ENCODE measurements at regions of chr6 and their contacts with region 1.

Region 1: DNA sequence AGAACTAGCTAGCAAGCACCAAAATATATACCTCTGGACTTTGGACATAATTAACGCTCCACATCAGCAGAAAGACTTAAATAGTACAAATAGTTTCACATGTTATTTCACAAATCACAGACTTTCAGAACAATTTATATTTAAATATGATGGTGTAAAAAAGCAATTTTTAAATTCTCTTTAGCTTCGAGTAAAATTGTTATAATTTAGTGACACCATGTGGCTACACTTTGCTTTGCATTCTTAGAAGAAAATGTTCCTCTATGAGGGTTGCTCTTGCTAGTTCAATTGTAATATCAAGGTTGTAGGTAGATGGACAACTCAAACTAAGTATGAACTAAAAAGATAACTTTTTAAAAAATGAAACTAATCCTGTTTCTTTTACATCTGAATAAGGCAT is 69.0 kb downstream of the BTBD9 start:
- DNase-seq: no peak
- ATAC-seq: peak; percentile 61
- H3K4me3 ChIP-seq: no peak overlapping the region
- H3K27ac ChIP-seq: no peak overlapping the region
- H3K4me1 ChIP-seq: no peaks in the 10 kb centered on the region
- H3K27me3 ChIP-seq: no peaks in the 10 kb centered on the region
- CTCF ChIP-seq: peak; percentile 12 to 53 (median 46); a peak in 2 of 6 replicates
- EP300 ChIP-seq: no peak
- POLR2A ChIP-seq: no peak
- RAD21 ChIP-seq: peak; percentile 63

Region 2: GRCh38 chr6:38477680-38478260 is 93.0 kb before region 1 on chr6:
- CTCF ChIA-PET with region 1: interaction called, 3 read pairs
- POLR2A ChIA-PET with region 1: no interaction called
- RAD21 ChIA-PET with region 1: no interaction called
- SMC1A ChIA-PET with region 1: interaction called, 11 read pairs
- in situ Hi-C with region 1: no loop called
- intact Hi-C with region 1: no loop called
- DNase-seq: no peak
- ATAC-seq: no peak
- H3K4me3 ChIP-seq: no peak overlapping the region
- H3K27ac ChIP-seq: no peak overlapping the region
- H3K4me1 ChIP-seq: peaks cover 2% of the 10 kb centered on the region; the same call in 1 of the 2 replicates
- H3K27me3 ChIP-seq: no peaks in the 10 kb centered on the region
- CTCF ChIP-seq: no peak
- EP300 ChIP-seq: no peak
- POLR2A ChIP-seq: no peak
- RAD21 ChIP-seq: no peak

Region 3: GRCh38 chr6:38517005-38517404 is 53.7 kb before region 1 on chr6:
- CTCF ChIA-PET with region 1: interaction called, 4 read pairs
- POLR2A ChIA-PET with region 1: no interaction called
- RAD21 ChIA-PET with region 1: interaction called, 10 read pairs
- SMC1A ChIA-PET with region 1: interaction called, 3 read pairs
- in situ Hi-C with region 1: no loop called
- intact Hi-C with region 1: no loop called
- DNase-seq: no peak
- ATAC-seq: no peak
- H3K4me3 ChIP-seq: no peak overlapping the region
- H3K27ac ChIP-seq: no peak overlapping the region
- H3K4me1 ChIP-seq: no peaks in the 10 kb centered on the region
- H3K27me3 ChIP-seq: no peaks in the 10 kb centered on the region
- CTCF ChIP-seq: no peak
- EP300 ChIP-seq: no peak
- POLR2A ChIP-seq: no peak
- RAD21 ChIP-seq: no peak

Region 4: GRCh38 chr6:38552121-38552520 is 18.6 kb before region 1 on chr6:
- CTCF ChIA-PET with region 1: interaction called, 16 read pairs
- POLR2A ChIA-PET with region 1: no interaction called
- RAD21 ChIA-PET with region 1: interaction called, 5 read pairs
- SMC1A ChIA-PET with region 1: interaction called, 16 read pairs
- in situ Hi-C with region 1: no loop called
- intact Hi-C with region 1: no loop called
- DNase-seq: peak; percentile 56
- ATAC-seq: peak; percentile 94
- H3K4me3 ChIP-seq: no peak overlapping the region
- H3K27ac ChIP-seq: no peak overlapping the region
- H3K4me1 ChIP-seq: no peaks in the 10 kb centered on the region
- H3K27me3 ChIP-seq: no peaks in the 10 kb centered on the region
- CTCF ChIP-seq: no peak
- EP300 ChIP-seq: no peak
- POLR2A ChIP-seq: no peak
- RAD21 ChIP-seq: no peak

Region 5: GRCh38 chr6:38671885-38672467 is 101.2 kb after region 1 on chr6:
- CTCF ChIA-PET with region 1: interaction called, 6 read pairs
- POLR2A ChIA-PET with region 1: no interaction called
- RAD21 ChIA-PET with region 1: interaction called, 4 read pairs
- SMC1A ChIA-PET with region 1: interaction called, 4 read pairs
- in situ Hi-C with region 1: no loop called
- intact Hi-C with region 1: loop called (anchors 5 kb)
- DNase-seq: peak; percentile 55
- ATAC-seq: peak; percentile 91
- H3K4me3 ChIP-seq: no peak overlapping the region
- H3K27ac ChIP-seq: no peak overlapping the region
- H3K4me1 ChIP-seq: peaks cover 18% of the 10 kb centered on the region
- H3K27me3 ChIP-seq: no peaks in the 10 kb centered on the region
- CTCF ChIP-seq: peak; percentile 70 to 84 (median 81)
- EP300 ChIP-seq: no peak
- POLR2A ChIP-seq: no peak
- RAD21 ChIP-seq: peak; percentile 86

Region 6: GRCh38 chr6:39102071-39102820 is 531.5 kb after region 1 on chr6:
- CTCF ChIA-PET with region 1: no interaction called
- POLR2A ChIA-PET with region 1: no interaction called
- RAD21 ChIA-PET with region 1: no interaction called
- SMC1A ChIA-PET with region 1: no interaction called
- in situ Hi-C with region 1: no loop called
- intact Hi-C with region 1: no loop called
- DNase-seq: no peak
- ATAC-seq: peak; percentile 73
- H3K4me3 ChIP-seq: no peak overlapping the region
- H3K27ac ChIP-seq: no peak overlapping the region
- H3K4me1 ChIP-seq: no peaks in the 10 kb centered on the region
- H3K27me3 ChIP-seq: no peaks in the 10 kb centered on the region
- CTCF ChIP-seq: peak; percentile 34 to 49 (median 48); a peak in 5 of 6 replicates
- EP300 ChIP-seq: no peak
- POLR2A ChIP-seq: no peak
- RAD21 ChIP-seq: no peak

Measured in GM12878 (cell line).